ENCODE measurements at regions of chr10 and their contacts with region 1.

Region 1: GRCh38 chr10:48330269-48330668 is 23.8 kb downstream of the MAPK8 start:
- DNase-seq: peak; percentile 40
- ATAC-seq: no peak
- H3K4me3 ChIP-seq: no peak overlapping the region
- H3K27ac ChIP-seq: no peak overlapping the region
- H3K4me1 ChIP-seq: 0 out of 2 replicates have a peak, but pooled peaks cover 2% of the 10 kb centered on the region
- H3K27me3 ChIP-seq: no peaks in the 10 kb centered on the region
- CTCF ChIP-seq: no peak
- POLR2A ChIP-seq: no peak
- RAD21 ChIP-seq: no peak

Region 2: GRCh38 chr10:48273741-48274140 is 56.5 kb before region 1 on chr10:
- CTCF ChIA-PET with region 1: no interaction called
- POLR2A ChIA-PET with region 1: no interaction called
- dilution Hi-C with region 1: no loop called
- in situ Hi-C with region 1: no loop called
- intact Hi-C with region 1: loop called (anchors 2 kb)
- DNase-seq: no peak
- ATAC-seq: no peak
- H3K4me3 ChIP-seq: no peak overlapping the region
- H3K27ac ChIP-seq: no peak overlapping the region
- H3K4me1 ChIP-seq: no peaks in the 10 kb centered on the region
- H3K27me3 ChIP-seq: peaks cover 34% of the 10 kb centered on the region
- CTCF ChIP-seq: no peak
- POLR2A ChIP-seq: no peak
- RAD21 ChIP-seq: no peak